K562 (cell line): ENCODE measurements at regions of chr11 and their contacts with region 1.

Region 1: DNA sequence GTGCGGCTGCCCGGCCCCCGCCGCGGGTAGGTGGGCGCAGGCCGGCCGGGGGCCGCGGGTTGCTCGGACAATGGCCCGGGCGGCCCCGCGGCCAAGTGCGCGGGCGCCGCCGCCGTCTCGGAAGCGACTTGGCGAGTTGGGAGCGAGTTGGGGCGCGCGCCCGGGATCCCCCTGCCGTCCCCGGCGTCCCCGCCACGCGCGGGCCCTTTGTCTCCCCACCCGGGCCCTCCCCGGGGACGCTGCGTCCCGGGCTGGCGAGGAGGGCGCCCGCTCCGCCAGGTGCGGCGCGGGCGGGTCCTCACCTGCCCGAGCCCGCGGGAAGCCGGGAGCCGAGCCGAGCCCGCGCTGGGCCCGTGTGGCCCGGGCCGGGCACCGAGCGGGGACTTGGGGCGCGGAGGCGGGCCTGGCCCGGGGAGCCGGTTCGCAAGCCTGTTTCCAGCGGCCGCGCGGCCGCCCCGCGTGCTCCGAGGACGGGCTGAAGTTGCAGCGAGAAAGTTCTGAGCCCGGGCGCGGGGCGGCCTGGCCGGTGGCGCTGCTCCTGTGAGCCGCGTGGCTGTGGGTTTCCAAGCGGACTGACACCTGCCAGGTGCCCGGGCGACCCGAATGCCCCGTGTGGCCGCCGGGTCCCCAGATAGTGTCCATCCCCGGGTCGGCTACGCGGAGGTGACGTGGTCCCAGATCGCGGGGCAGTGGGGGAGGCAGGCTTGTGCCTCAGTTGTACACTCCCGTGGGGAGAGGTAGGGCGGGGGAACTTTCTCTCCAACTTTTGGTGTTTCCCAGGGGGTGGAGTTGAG is 586 bp downstream of the LRP5 start:
- DNase-seq: peak; percentile 39 to 84 (median 66)
- ATAC-seq: peak; percentile 7
- H3K4me3 ChIP-seq: peak overlapping the region; percentile 82
- H3K27ac ChIP-seq: peak overlapping the region; percentile 90
- H3K4me1 ChIP-seq: peaks cover 12 to 51% of the 10 kb centered on the region in 2 experiments
- H3K27me3 ChIP-seq: no peaks in the 10 kb centered on the region
- CTCF ChIP-seq: 0 out of 6 replicates have a peak, but pooled peaks of 1 of the 3 experiments have one; percentile 0
- EP300 ChIP-seq: no peak
- POLR2A ChIP-seq: no peak
- RAD21 ChIP-seq: no peak

Region 2: DNA sequence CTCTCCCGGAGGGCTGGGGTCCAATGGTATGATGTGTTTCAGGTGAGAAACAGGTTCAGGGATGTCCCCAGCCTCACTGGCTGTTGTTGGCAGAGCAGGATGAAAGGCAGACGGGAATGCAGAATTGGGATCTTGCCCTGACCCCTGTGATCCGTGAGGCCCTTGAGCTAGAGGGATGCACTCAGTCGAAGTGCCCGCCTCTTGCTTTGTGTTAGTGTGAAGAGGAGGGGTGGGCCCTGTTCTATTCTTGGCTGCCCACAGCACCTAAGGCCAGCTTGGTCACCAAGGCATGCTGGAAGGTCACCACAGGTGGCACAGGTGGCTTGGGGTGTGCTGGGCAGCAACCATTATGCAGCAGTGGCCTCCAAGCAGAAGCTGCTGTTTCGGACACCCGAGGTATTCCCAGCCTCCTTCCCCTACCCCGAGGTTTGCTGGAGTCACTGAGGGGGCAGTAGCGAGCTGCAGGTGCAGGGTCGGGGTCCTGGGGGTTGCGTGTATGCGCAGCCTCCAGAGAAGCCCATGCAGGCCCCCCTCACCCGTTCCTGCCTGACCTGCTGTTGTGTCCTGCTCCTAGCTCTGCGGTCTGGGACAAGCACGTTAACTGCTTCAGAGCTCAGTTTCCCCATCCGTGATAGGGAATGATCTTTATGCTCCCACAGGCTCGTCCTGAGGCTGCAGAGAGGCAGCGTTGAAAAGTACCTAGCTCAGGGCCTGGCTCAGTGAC is 12.4 kb after region 1 on chr11:
- CTCF ChIA-PET with region 1: no interaction called
- POLR2A ChIA-PET with region 1: interaction called, 14 read pairs
- in situ Hi-C with region 1: no loop called
- intact Hi-C with region 1: no loop called
- DNase-seq: no peak
- ATAC-seq: no peak
- H3K4me3 ChIP-seq: no peak overlapping the region
- H3K27ac ChIP-seq: no peak overlapping the region
- H3K4me1 ChIP-seq: peaks cover 0 to 35% of the 10 kb centered on the region in 2 experiments; a peak in 2 of 5 replicates
- H3K27me3 ChIP-seq: no peaks in the 10 kb centered on the region
- CTCF ChIP-seq: 0 out of 6 replicates have a peak, but pooled peaks of 1 of the 3 experiments have one; percentile 3
- EP300 ChIP-seq: no peak
- POLR2A ChIP-seq: no peak
- RAD21 ChIP-seq: no peak

Region 3: GRCh38 chr11:68370211-68371111 is 57.5 kb after region 1 on chr11:
- CTCF ChIA-PET with region 1: no interaction called
- POLR2A ChIA-PET with region 1: no interaction called
- in situ Hi-C with region 1: no loop called
- intact Hi-C with region 1: no loop called
- DNase-seq: no peak
- ATAC-seq: no peak
- H3K4me3 ChIP-seq: no peak overlapping the region
- H3K27ac ChIP-seq: no peak overlapping the region
- H3K4me1 ChIP-seq: peaks cover 0 to 28% of the 10 kb centered on the region in 2 experiments; a peak in 2 of 5 replicates
- H3K27me3 ChIP-seq: no peaks in the 10 kb centered on the region
- CTCF ChIP-seq: no peak
- EP300 ChIP-seq: no peak
- POLR2A ChIP-seq: no peak
- RAD21 ChIP-seq: no peak